ENCODE measurements at regions of chr2 and their contacts with region 1.

Region 1: GRCh38 chr2:192267484-192267883 is 72.8 kb upstream of the TMEFF2 start:
- DNase-seq: no peak
- ATAC-seq: peak in 1 of 4 donors; percentile 43
- H3K4me3 ChIP-seq: no peak overlapping the region
- H3K27ac ChIP-seq: no peak overlapping the region
- H3K4me1 ChIP-seq: no peaks in the 10 kb centered on the region
- H3K27me3 ChIP-seq: no peaks in the 10 kb centered on the region
- CTCF ChIP-seq: no peak
- POLR2A ChIP-seq: no peak

Region 2: GRCh38 chr2:191696001-191696400 is 571.5 kb before region 1 on chr2:
- intact Hi-C with region 1: no loop called
- DNase-seq: peak in 3 of 5 donors; percentile 46 to 74 (median 58)
- ATAC-seq: peak in 3 of 4 donors; percentile 75 to 88 (median 82)
- H3K4me3 ChIP-seq: no peak overlapping the region
- H3K27ac ChIP-seq: no peak overlapping the region
- H3K4me1 ChIP-seq: peaks cover 0 to 18% (median 3%) of the 10 kb centered on the region in 12 donors
- H3K27me3 ChIP-seq: peaks cover 0 to 6% (median 0%) of the 10 kb centered on the region in 9 donors
- CTCF ChIP-seq: no peak
- POLR2A ChIP-seq: no peak

Region 3: GRCh38 chr2:192230889-192231453 is 36.5 kb before region 1 on chr2:
- intact Hi-C with region 1: no loop called
- DNase-seq: no peak
- ATAC-seq: no peak
- H3K4me3 ChIP-seq: no peak overlapping the region
- H3K27ac ChIP-seq: no peak overlapping the region
- H3K4me1 ChIP-seq: no peaks in the 10 kb centered on the region
- H3K27me3 ChIP-seq: peaks cover 0 to under 1% (median 0%) of the 10 kb centered on the region in 9 donors
- CTCF ChIP-seq: no peak
- POLR2A ChIP-seq: no peak

Region 4: DNA sequence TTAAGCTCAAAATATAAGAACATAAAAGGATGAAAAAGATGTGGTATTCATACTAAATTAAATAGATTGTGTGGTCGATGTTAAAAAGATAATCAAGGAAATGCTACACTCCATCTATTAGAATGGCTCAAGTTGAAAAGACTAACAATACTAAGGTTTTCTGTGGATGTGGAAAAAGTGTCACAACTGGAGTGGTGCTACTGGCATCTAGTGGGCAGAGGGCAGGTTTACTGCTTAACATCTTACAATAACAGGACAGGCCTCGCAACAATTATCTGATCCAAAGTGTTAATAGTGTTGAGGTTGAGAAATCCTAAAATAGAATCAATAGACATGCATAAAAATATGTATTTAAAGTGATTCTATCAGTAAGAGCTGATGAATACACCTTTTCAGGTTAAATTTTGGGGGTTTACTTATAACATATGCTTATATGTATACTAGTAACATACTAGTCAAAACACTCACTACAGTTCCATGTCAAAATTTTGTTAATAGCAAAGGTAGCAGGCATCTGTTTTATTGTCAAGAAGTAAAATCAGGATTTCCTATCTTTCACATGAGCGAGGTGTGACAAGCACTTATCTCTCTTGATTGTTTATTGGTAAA is 18.7 kb after region 1 on chr2:
- intact Hi-C with region 1: loop called in 1 of 10 experiments (anchors 2 kb)
- DNase-seq: no peak
- ATAC-seq: no peak
- H3K4me3 ChIP-seq: no peak overlapping the region
- H3K27ac ChIP-seq: no peak overlapping the region
- H3K4me1 ChIP-seq: peaks cover 0 to 5% (median 0%) of the 10 kb centered on the region in 12 donors
- H3K27me3 ChIP-seq: no peaks in the 10 kb centered on the region
- CTCF ChIP-seq: peak in 4 of 12 donors; percentile 16 to 31 (median 27)
- POLR2A ChIP-seq: no peak